MCF 10A (cell line): ENCODE measurements at regions of chr15 and their contacts with region 1.

Region 1: GRCh38 chr15:76150971-76151598 is 91.3 kb downstream of the TMEM266 start:
- DNase-seq: peak; percentile 81
- H3K4me3 Mint-ChIP-seq: no peak overlapping the region
- H3K27ac Mint-ChIP-seq: no peak overlapping the region
- H3K4me1 Mint-ChIP-seq: peaks cover 10% of the 10 kb centered on the region
- H3K27me3 Mint-ChIP-seq: no peaks in the 10 kb centered on the region
- CTCF ChIP-seq: peak; percentile 90

Region 2: GRCh38 chr15:76163475-76163881 is 12.4 kb after region 1 on chr15:
- CTCF ChIA-PET with region 1: interaction called, 17 read pairs
- POLR2A ChIA-PET with region 1: interaction called, 9 read pairs
- intact Hi-C with region 1: no loop called
- DNase-seq: peak; percentile 91
- H3K4me3 Mint-ChIP-seq: no peak overlapping the region
- H3K27ac Mint-ChIP-seq: peak overlapping the region; percentile 27
- H3K4me1 Mint-ChIP-seq: peaks cover 9% of the 10 kb centered on the region
- H3K27me3 Mint-ChIP-seq: no peaks in the 10 kb centered on the region
- CTCF ChIP-seq: no peak

Region 3: GRCh38 chr15:76177491-76178040 is 26.5 kb after region 1 on chr15:
- CTCF ChIA-PET with region 1: interaction called, 22 read pairs
- POLR2A ChIA-PET with region 1: no interaction called
- intact Hi-C with region 1: no loop called
- DNase-seq: peak; percentile 92
- H3K4me3 Mint-ChIP-seq: peak overlapping the region; percentile 44
- H3K27ac Mint-ChIP-seq: peak overlapping the region; percentile 91
- H3K4me1 Mint-ChIP-seq: peaks cover 18% of the 10 kb centered on the region
- H3K27me3 Mint-ChIP-seq: no peaks in the 10 kb centered on the region
- CTCF ChIP-seq: no peak

Region 4: GRCh38 chr15:76267077-76267476 is 116.0 kb after region 1 on chr15:
- CTCF ChIA-PET with region 1: no interaction called
- POLR2A ChIA-PET with region 1: no interaction called
- intact Hi-C with region 1: no loop called
- DNase-seq: no peak
- H3K4me3 Mint-ChIP-seq: no peak overlapping the region
- H3K27ac Mint-ChIP-seq: no peak overlapping the region
- H3K4me1 Mint-ChIP-seq: peaks cover 6% of the 10 kb centered on the region
- H3K27me3 Mint-ChIP-seq: no peaks in the 10 kb centered on the region
- CTCF ChIP-seq: no peak